ENCODE measurements at regions of chr22 and their contacts with region 1.

Region 1: GRCh38 chr22:32202539-32203180 is 2.2 kb downstream of the RFPL2 start:
- DNase-seq: no peak
- ATAC-seq: no peak
- H3K4me3 Mint-ChIP-seq: no peak overlapping the region
- H3K27ac Mint-ChIP-seq: no peak overlapping the region
- H3K4me1 Mint-ChIP-seq: no peaks in the 10 kb centered on the region
- H3K27me3 Mint-ChIP-seq: peaks cover 40% of the 10 kb centered on the region
- CTCF ChIP-seq: no peak

Region 2: GRCh38 chr22:32444068-32444467 is 241.4 kb after region 1 on chr22:
- CTCF ChIA-PET with region 1: no interaction called
- POLR2A ChIA-PET with region 1: no interaction called
- intact Hi-C with region 1: loop called (anchors 10 kb)
- DNase-seq: no peak
- ATAC-seq: no peak
- H3K4me3 Mint-ChIP-seq: no peak overlapping the region
- H3K27ac Mint-ChIP-seq: no peak overlapping the region
- H3K4me1 Mint-ChIP-seq: no peaks in the 10 kb centered on the region
- H3K27me3 Mint-ChIP-seq: peaks cover 7% of the 10 kb centered on the region
- CTCF ChIP-seq: no peak

Measured in activated B cell treated with CpG ODN at 0.5 μM for 24 hours (primary cell).